Common myeloid progenitor, CD34-positive (primary cell): ENCODE measurements at regions of chr15 and their contacts with region 1.

Region 1: GRCh38 chr15:66774001-66774814 is 72.2 kb downstream of the SMAD6 start:
- DNase-seq: peak; percentile 70 to 79 (median 74)
- H3K4me3 ChIP-seq: no peak overlapping the region
- H3K27ac ChIP-seq: no peak overlapping the region
- H3K4me1 ChIP-seq: peaks cover 3 to 18% (median 12%) of the 10 kb centered on the region in 4 experiments
- H3K27me3 ChIP-seq: no peaks in the 10 kb centered on the region

Region 2: DNA sequence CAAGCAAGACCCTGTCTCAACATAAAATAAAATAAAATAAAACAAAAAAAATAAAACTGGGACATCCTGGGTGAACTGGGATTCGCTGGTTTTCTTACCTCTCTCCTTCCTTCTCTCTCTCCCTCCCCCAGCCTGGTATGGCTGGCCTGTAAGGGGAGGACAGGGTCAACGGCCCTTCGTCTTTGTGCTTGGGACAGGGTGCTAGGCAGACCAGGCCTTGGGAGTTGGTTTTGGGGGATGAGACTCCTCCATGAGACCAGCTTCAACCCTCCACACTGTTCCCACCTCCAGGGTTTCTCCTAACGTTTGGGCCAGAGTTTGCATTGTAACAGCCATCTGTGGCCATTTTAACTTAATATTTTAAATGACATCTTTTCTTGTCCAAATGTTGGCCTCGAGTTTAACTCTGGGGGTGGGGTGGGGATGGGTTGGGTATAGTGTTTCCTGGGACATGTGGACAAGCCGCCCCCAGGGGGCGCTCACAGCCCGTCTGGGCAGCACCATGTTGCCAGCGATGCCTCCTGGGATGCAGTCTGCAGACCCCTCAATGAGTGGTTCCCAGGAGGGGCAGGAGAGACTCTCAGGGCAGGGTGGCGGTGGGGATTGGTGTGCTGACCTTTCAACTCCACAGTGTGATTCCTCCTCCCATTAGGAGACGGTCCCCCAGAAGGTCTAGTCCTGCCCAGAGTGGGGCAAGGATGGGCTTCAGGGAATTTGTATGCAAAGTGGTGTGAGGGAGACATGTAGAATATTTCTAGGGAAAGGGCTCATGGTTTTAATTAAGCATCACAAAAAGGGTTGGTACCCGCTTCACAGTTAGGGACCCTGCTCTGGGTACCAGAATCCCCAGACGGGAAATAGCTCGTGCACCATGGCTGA is 170.7 kb before region 1 on chr15:
- CTCF ChIA-PET with region 1: interaction called, 35 read pairs
- POLR2A ChIA-PET with region 1: no interaction called
- DNase-seq: peak; percentile 76 to 87 (median 77)
- H3K4me3 ChIP-seq: no peak overlapping the region
- H3K27ac ChIP-seq: no peak overlapping the region
- H3K4me1 ChIP-seq: peaks cover 0 to 14% (median 0%) of the 10 kb centered on the region in 4 experiments
- H3K27me3 ChIP-seq: no peaks in the 10 kb centered on the region

Region 3: DNA sequence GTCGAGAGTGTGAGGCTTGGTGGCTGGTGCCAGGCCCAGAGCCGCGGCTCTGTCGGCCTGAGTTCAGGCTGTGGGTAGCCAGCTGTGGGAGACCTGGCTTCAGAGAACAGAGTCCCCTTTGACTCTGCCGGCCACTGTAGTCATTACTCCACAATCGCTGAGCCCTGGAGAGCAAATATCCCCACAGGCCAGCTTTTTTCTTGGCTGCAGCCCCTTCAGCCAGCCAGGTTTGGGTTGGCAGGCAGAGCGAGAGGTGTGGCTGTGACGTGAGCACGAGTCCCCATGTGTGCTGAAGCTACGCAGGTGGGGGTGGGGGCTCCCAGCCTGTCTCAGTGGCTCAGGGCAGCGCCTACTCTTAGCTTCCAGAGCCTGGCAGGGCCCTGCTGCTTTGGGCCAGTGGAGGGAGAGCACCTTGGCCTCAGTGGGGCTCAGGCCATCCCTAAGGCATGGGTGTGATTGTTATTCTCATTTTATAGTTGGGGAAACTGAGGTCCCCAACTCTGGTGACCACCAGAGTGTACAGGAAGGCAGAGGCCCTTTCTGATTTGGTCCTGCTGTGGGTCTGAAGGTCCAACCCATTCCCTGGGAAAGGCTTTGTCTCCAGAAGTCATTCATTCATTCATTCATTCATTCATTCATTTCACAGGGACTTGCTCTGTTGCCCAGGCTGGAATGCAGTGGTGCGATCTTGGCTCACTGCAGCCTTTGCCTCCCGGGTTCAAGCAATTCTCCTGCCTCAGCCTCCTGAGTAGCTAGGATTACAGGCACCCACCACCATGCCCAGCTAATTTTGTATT is 162.8 kb before region 1 on chr15:
- CTCF ChIA-PET with region 1: interaction called, 35 read pairs
- POLR2A ChIA-PET with region 1: no interaction called
- DNase-seq: no peak
- H3K4me3 ChIP-seq: no peak overlapping the region
- H3K27ac ChIP-seq: no peak overlapping the region
- H3K4me1 ChIP-seq: peaks cover 18 to 52% (median 38%) of the 10 kb centered on the region in 4 experiments
- H3K27me3 ChIP-seq: no peaks in the 10 kb centered on the region

Region 4: DNA sequence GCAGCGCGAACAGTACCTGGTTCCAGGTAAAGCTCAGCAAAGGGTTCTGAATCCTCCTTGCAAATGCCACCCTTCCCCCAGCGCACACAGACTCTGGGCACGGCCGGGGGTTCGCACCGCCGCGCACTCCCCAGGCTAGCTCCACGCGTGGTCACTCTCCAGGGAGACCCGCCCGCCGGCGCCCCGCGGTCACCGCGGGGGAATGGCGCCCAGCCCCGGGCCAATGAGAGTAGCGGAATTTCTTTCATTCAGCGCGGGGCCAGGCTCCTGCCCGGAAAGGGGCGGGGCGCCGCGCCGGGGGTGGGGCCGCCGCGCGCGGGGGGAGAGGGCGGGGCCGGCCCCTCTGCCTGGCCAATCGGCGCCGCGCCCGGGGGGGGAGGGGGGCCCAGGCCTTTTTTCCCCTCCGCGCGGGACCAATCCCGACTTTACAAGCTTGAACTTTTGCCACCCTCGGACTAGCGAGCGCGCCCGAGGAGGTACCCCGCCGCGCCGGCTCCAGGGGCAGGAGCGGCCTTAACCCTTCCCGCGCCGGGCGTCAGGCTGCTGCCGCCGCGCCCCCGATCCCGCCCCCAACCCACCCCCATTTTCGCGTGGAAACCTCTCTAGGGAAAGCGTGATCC is 73.3 kb before region 1 on chr15:
- CTCF ChIA-PET with region 1: interaction called, 48 read pairs
- POLR2A ChIA-PET with region 1: interaction called, 4 read pairs
- DNase-seq: peak; percentile 85 to 92 (median 86)
- H3K4me3 ChIP-seq: peak overlapping the region; percentile 51 to 85 (median 68)
- H3K27ac ChIP-seq: peak overlapping the region in 1 of 2 experiments; percentile 61
- H3K4me1 ChIP-seq: peaks cover 4 to 43% (median 35%) of the 10 kb centered on the region in 4 experiments
- H3K27me3 ChIP-seq: peaks cover 0 to 34% (median 5%) of the 10 kb centered on the region in 5 experiments

Region 5: DNA sequence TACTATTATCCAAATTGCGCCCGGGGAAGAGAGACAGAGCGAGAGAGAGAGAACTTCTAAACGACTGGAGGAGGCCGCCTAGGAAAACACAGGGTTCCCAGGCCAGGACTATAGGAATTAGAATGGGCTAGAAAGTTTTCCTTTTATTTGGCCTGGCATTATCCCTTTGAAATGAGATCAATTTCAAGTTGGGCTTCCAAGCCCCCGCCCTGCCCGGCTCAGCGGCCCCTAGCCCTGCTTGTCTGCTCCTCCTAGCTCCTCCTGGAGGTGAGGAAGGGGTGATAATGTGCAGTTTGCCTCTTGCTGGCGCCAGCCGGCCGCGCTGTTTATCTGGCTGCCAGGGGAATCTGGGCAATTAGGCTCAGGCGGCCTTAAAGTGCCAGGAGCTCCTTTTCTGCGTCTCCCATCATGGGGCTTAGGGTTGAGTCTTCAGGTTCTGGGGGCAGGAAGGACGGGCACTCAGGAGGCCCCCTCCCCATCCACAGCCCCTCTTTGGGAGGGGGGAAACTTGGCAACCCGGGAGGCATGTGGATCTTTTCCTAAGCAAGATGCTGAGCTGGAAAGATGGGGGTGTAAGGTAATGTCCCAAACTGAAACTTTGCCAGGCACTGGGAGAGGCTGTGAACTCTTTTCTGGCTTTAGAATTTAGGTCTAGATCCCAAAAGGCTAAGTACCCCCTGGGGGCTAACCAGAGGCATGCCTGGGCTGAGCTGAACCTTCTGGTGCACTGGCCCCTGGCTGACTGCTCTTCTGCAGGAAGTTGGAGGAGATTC is 66.7 kb before region 1 on chr15:
- CTCF ChIA-PET with region 1: interaction called, 48 read pairs
- POLR2A ChIA-PET with region 1: interaction called, 4 read pairs
- DNase-seq: peak in 2 of 3 donors; percentile 22 to 40
- H3K4me3 ChIP-seq: no peak overlapping the region
- H3K27ac ChIP-seq: no peak overlapping the region
- H3K4me1 ChIP-seq: peaks cover 1 to 31% (median 21%) of the 10 kb centered on the region in 4 experiments
- H3K27me3 ChIP-seq: peaks cover 0 to 31% (median 3%) of the 10 kb centered on the region in 5 experiments